AG04450 (cell line): ENCODE measurements at regions of chr16 and their contacts with region 1.

Region 1: DNA sequence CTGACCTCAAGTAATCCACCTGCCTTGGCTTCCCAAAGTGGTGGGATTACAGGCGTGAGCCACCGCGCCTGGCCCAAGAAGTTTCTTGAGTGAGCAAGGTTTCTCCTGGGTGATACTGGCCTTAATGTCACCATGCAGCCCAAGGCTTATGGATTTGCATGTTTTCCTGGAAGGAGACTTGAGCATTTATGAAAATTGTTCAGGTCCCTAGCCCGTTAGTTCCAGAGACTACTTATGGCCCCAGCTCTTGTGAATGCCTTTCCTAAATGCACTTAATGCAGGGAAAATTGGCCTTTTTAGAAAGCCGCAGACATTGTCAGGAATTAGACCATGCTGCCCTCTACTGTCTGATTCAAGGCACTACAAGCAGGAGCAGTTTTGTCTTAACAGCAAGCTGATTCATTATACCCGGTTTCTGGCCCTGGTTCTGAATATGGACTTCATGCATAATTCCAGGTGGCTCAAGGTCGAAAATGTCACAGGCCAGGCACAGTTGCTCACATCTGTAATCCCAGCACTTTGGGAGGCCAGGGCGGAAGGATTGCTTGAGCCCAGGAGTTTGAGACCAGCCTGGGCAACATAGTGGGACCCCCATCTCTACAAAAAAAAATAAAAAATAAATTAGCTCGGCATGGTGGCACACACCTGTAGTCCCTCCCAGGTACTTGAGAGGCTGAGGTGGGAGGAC is 91.3 kb downstream of the SNX29 start:
- DNase-seq: peak; percentile 78
- H3K4me3 ChIP-seq: no peak overlapping the region
- H3K27ac ChIP-seq: no peak overlapping the region
- H3K27me3 ChIP-seq: no peaks in the 10 kb centered on the region
- CTCF ChIP-seq: peak; percentile 92

Region 2: DNA sequence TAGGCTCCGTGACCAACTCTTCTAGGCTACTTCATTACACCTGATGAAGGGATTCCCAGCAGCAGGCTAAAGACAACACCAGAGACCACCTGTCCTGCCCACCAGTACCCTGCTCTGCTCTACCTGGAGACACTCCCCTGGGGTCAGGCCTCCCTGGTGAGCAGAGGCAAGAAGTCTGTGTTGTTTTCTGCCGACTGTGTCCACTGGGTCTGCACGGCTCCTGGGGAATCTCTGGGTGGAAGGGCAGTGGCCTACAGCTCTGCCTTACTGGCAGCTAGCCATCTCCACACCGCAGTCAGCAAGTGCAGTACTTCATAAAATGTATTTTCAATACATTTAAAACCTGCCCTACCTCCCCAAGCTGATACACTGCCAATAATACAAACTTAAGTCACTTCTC is 223.4 kb before region 1 on chr16:
- CTCF ChIA-PET with region 1: interaction called, 16 read pairs
- POLR2A ChIA-PET with region 1: no interaction called
- DNase-seq: no peak
- H3K4me3 ChIP-seq: no peak overlapping the region
- H3K27ac ChIP-seq: no peak overlapping the region
- H3K27me3 ChIP-seq: no peaks in the 10 kb centered on the region
- CTCF ChIP-seq: no peak

Region 3: DNA sequence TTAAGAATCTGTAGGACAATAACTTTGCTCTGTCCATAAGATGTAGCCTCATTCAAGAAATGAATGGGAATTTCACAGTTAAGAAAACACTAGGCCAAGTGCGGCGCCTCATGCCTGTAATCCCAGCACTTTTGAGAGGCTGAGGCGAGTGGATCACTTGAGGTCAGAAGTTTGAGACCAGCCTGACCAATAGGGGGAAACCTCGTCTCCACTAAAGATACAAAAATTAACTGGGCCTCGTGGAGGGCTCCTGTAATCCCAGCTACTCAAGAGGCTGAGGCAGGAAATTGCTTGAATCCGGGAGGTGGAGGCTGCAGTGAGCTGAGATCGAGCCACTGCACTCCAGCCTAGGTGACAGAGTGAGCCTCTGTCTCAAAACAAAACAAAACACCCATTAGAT is 196.7 kb before region 1 on chr16:
- CTCF ChIA-PET with region 1: interaction called, 20 read pairs
- POLR2A ChIA-PET with region 1: no interaction called
- DNase-seq: no peak
- H3K4me3 ChIP-seq: no peak overlapping the region
- H3K27ac ChIP-seq: no peak overlapping the region
- H3K27me3 ChIP-seq: no peaks in the 10 kb centered on the region
- CTCF ChIP-seq: peak; percentile 23; the same call in 1 of the 2 replicates

Region 4: GRCh38 chr16:11907160-11907970 is 160.5 kb before region 1 on chr16:
- CTCF ChIA-PET with region 1: interaction called, 15 read pairs
- POLR2A ChIA-PET with region 1: no interaction called
- DNase-seq: no peak
- H3K4me3 ChIP-seq: no peak overlapping the region
- H3K27ac ChIP-seq: no peak overlapping the region
- H3K27me3 ChIP-seq: no peaks in the 10 kb centered on the region
- CTCF ChIP-seq: no peak

Region 5: DNA sequence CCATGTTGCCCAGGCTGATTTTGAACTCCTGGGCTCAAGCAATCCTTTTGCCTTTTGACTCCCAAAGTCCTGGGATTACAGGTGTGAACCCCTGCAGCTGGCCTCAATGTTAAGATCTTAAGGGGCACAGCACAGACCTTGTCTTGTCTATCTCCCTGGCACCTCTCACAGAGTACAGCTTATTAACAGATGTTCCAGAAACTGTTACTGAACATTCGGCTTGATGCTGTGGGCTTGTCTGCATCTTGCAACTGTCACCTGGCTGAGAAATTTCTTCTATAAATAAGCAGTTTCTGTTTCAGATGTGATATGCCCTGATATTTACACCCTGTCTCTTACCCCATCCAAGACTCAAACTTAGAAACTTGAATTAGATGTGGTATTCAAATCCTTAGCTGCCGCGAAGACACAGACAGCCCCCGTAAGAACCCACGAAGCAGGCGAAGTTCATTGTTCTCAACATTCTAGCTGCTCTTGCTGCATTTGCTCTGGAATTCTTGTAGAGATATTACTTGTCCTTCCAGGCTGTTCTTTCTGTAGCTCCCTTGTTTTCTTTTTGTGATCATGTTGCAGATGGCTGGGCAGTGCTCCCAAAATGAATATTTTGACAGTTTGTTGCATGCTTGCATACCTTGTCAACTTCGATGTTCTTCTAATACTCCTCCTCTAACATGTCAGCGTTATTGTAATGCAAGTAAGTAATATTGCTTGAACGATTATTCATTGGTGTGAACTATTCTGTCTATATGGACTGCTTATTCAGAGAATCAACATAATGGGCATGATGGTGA is 102.9 kb before region 1 on chr16 and contains the start of gene TNFRSF17:
- CTCF ChIA-PET with region 1: interaction called, 21 read pairs
- POLR2A ChIA-PET with region 1: no interaction called
- DNase-seq: no peak
- H3K4me3 ChIP-seq: no peak within 1 kb of the TSS
- H3K27ac ChIP-seq: no peak within 1 kb of the TSS
- H3K27me3 ChIP-seq: no peaks in the 10 kb centered on the region
- CTCF ChIP-seq: no peak
- polyA plus RNA-seq, gene TNFRSF17: not detected in 2 replicates

Region 6: GRCh38 chr16:12057266-12057665 is 10.6 kb before region 1 on chr16:
- CTCF ChIA-PET with region 1: interaction called, 13 read pairs
- POLR2A ChIA-PET with region 1: no interaction called
- DNase-seq: no peak
- H3K4me3 ChIP-seq: no peak overlapping the region
- H3K27ac ChIP-seq: peak overlapping the region; percentile 21
- H3K27me3 ChIP-seq: no peaks in the 10 kb centered on the region
- CTCF ChIP-seq: peak; percentile 8; the same call in 1 of the 2 replicates

Region 7: GRCh38 chr16:12120217-12120981 is 52.5 kb after region 1 on chr16:
- CTCF ChIA-PET with region 1: no interaction called
- POLR2A ChIA-PET with region 1: no interaction called
- DNase-seq: no peak
- H3K4me3 ChIP-seq: no peak overlapping the region
- H3K27ac ChIP-seq: peak overlapping the region; percentile 39
- H3K27me3 ChIP-seq: no peaks in the 10 kb centered on the region
- CTCF ChIP-seq: no peak